ENCODE measurements at regions of chr5 and their contacts with region 1.

Region 1: DNA sequence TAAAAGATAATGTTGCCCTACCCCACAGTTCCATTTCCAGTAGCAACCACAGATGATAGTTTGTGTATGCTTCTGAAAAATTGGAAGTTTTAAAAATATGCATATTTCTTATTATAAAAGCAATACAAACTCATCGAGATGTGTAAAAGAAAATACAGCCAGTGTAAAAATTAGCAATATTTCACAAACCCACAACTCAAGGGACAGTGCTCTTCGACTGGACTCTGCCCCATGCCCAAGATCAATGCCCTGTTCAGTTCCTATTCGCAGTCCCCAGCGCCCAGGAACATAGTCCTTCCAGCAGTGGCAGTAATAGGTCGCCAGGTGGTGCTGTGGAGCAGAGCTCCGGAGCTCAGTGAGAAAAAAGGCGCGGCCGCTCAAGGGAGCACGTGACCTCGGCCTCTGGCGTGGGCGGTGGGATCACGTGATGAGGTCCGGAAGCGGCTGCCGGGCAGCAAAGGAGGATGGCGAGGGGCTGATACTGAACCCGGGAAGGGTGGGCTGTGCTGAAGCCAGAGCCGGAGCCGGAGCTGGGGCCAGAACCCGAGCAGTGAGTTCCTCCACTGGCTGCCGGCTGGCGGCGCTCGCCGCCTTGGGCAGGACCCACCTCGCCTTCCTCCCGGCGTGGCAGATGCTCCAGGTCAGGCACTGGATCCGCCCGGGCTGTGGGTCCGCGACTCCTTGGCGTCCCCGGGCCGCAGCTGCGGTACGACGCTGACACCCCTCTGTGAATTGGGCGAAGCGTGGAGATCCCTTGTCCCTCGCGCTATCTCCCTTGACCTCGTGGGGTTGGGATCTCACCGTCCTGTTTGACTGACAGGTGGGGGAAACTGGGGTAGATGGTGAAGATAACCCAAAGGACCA is at the start of gene SLC36A1:
- DNase-seq: peak; percentile 82 to 95 (median 88)
- ATAC-seq: peak; percentile 97
- H3K4me3 ChIP-seq: peak within 1 kb of the TSS; percentile 93
- H3K4me3 Mint-ChIP-seq: peak within 1 kb of the TSS; percentile 98
- H3K27ac ChIP-seq: peak within 1 kb of the TSS in 1 of 2 donors; percentile 47
- H3K27ac Mint-ChIP-seq: peak within 1 kb of the TSS; percentile 68
- H3K4me1 ChIP-seq: peaks cover 18% of the 10 kb centered on the region
- H3K4me1 Mint-ChIP-seq: peaks cover 23% of the 10 kb centered on the region
- H3K27me3 ChIP-seq: peaks cover 0 to 9% of the 10 kb centered on the region in 2 experiments
- H3K27me3 Mint-ChIP-seq: peaks cover 33% of the 10 kb centered on the region
- CTCF ChIP-seq: peak; percentile 90
- total RNA-seq, gene SLC36A1: 2.2 to 2.8 TPM

Region 2: GRCh38 chr5:151459680-151460324 is 12.4 kb after region 1 on chr5:
- CTCF ChIA-PET with region 1: interaction called, 12 read pairs
- POLR2A ChIA-PET with region 1: interaction called, 7 read pairs
- intact Hi-C with region 1: no loop called
- DNase-seq: no peak
- ATAC-seq: no peak
- H3K4me3 ChIP-seq: no peak overlapping the region
- H3K4me3 Mint-ChIP-seq: no peak overlapping the region
- H3K27ac ChIP-seq: no peak overlapping the region
- H3K27ac Mint-ChIP-seq: no peak overlapping the region
- H3K4me1 ChIP-seq: no peaks in the 10 kb centered on the region
- H3K4me1 Mint-ChIP-seq: no peaks in the 10 kb centered on the region
- H3K27me3 ChIP-seq: no peaks in the 10 kb centered on the region
- H3K27me3 Mint-ChIP-seq: no peaks in the 10 kb centered on the region
- CTCF ChIP-seq: no peak

Region 3: DNA sequence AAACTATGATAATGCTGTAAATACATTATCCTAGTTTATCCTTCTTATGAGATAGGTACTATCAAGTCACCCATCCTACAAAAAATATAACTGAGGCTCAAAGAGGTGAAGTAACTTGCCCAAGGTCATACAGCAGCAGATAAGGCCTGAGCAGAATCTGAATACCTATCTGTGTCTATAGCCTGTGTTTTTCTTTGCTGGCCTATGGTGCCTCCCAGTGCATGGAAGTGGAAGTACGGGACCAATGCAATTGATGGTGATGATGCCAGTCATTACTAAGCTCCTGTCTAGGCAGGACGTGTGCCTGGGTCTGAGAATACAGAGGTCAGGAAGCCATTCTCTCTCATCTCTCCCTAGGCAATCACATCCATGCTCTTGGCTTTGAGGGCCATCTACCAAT is 75.9 kb after region 1 on chr5:
- CTCF ChIA-PET with region 1: interaction called, 6 read pairs
- POLR2A ChIA-PET with region 1: interaction called, 3 read pairs
- intact Hi-C with region 1: loop called in 1 of 2 experiments (anchors 1 kb)
- DNase-seq: peak in 8 of 14 experiments; percentile 5 to 58 (median 26)
- ATAC-seq: peak; percentile 54
- H3K4me3 ChIP-seq: no peak overlapping the region
- H3K4me3 Mint-ChIP-seq: no peak overlapping the region
- H3K27ac ChIP-seq: no peak overlapping the region
- H3K27ac Mint-ChIP-seq: no peak overlapping the region
- H3K4me1 ChIP-seq: no peaks in the 10 kb centered on the region
- H3K4me1 Mint-ChIP-seq: no peaks in the 10 kb centered on the region
- H3K27me3 ChIP-seq: no peaks in the 10 kb centered on the region
- H3K27me3 Mint-ChIP-seq: no peaks in the 10 kb centered on the region
- CTCF ChIP-seq: peak; percentile 34

Region 4: DNA sequence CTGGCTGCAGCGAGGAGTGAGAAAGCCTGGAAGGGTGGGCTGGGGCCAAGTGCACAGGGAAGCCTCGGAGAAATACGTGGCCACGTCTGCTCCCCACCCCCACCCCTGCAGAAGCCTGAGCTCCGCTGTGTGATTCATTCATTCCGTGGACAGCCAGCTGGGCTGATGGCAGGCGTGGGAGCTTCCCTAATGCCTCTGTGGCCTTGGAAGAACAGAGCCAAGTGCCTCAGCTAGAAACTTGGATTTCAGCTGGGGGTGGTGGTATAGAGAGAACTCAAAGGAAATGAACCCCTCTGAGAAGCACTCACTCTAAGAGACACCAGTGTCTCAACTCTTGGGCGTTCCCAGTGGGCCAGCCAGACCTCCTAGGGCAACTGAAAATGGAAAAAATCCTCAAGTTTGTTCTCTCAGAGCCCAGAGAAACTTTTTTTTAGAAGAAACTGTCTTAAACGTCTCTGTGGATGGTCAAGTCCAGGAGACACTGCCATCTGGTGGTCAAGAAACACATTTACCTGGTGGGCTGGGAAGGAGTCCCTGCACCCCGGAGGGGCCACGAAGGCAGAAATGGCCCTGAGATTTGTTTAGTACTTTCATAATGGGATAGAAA is 293.0 kb after region 1 on chr5:
- CTCF ChIA-PET with region 1: no interaction called
- POLR2A ChIA-PET with region 1: no interaction called
- intact Hi-C with region 1: loop called in 1 of 2 experiments (anchors 5 kb)
- DNase-seq: peak in 10 of 14 experiments; percentile 16 to 79 (median 32)
- ATAC-seq: peak; percentile 82
- H3K4me3 ChIP-seq: no peak overlapping the region
- H3K4me3 Mint-ChIP-seq: no peak overlapping the region
- H3K27ac ChIP-seq: no peak overlapping the region
- H3K27ac Mint-ChIP-seq: no peak overlapping the region
- H3K4me1 ChIP-seq: peaks cover 17% of the 10 kb centered on the region
- H3K4me1 Mint-ChIP-seq: peaks cover 15% of the 10 kb centered on the region
- H3K27me3 ChIP-seq: no peaks in the 10 kb centered on the region
- H3K27me3 Mint-ChIP-seq: no peaks in the 10 kb centered on the region
- CTCF ChIP-seq: peak; percentile 89